Left ventricle myocardium inferior (tissue), 1 donor: ENCODE measurements at regions of chr2 and their contacts with region 1.

Region 1: GRCh38 chr2:105235388-105236054 is 6.0 kb upstream of the GPR45 start:
- DNase-seq: peak; percentile 73
- H3K4me3 ChIP-seq: no peak overlapping the region
- H3K27ac ChIP-seq: no peak overlapping the region
- H3K4me1 ChIP-seq: no peaks in the 10 kb centered on the region
- H3K27me3 ChIP-seq: peaks cover 42% of the 10 kb centered on the region
- CTCF ChIP-seq: peak; percentile 78

Region 2: GRCh38 chr2:105114551-105114950 is 121.0 kb before region 1 on chr2:
- intact Hi-C with region 1: loop called (anchors 5 kb)
- DNase-seq: no peak
- H3K4me3 ChIP-seq: no peak overlapping the region
- H3K27ac ChIP-seq: no peak overlapping the region
- H3K4me1 ChIP-seq: no peaks in the 10 kb centered on the region
- H3K27me3 ChIP-seq: peaks cover 4% of the 10 kb centered on the region
- CTCF ChIP-seq: peak; percentile 84